Dorsolateral prefrontal cortex (tissue), 120 donors: ENCODE measurements at regions of chr7 and their contacts with region 1.

Region 1: DNA sequence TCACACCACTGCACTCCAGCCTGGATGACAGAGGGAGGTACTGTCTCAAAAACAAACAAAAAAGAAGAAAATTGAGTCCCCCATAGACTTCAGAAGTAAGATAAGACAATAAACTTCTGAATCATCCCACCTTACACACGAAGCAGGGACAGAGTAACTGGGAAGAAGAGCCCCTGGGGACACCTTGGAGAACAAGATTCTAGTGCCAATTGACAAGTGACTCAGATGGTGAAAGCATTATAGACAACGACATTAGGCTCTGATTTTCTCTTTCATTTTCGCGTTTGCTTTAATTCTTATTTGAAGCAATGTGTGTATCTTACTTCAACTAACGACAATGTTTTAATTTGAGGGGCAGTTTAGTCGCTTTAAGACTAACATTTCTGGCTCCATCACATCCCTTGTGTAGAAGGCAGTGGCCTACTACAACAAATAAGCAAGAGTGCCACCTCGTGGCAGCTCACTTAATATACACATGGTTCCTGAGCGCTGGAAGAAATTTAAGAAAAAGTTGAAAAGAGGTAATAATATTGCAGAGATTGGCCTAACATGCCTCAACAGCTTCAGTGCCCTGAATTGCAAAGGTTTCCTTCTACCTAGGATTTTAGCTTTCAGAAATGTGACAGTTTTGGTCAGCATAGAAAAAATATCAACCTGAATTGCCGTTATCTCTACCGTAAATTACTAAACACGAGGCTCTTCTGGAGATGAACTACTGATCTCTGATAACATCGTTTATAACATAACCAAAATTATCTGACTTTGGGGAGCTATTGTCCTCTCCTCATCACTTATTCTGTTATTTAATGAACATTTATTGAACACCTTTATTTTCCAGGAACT is 36.7 kb downstream of the ASNS start:
- DNase-seq: peak; percentile 32 to 89 (median 58)
- H3K4me3 ChIP-seq: no peak overlapping the region
- H3K27ac ChIP-seq: no peak overlapping the region
- H3K27me3 ChIP-seq: peaks cover 0 to 11% (median 0%) of the 10 kb centered on the region in 45 donors
- CTCF ChIP-seq: peak; percentile 47 to 90 (median 79)

Region 2: DNA sequence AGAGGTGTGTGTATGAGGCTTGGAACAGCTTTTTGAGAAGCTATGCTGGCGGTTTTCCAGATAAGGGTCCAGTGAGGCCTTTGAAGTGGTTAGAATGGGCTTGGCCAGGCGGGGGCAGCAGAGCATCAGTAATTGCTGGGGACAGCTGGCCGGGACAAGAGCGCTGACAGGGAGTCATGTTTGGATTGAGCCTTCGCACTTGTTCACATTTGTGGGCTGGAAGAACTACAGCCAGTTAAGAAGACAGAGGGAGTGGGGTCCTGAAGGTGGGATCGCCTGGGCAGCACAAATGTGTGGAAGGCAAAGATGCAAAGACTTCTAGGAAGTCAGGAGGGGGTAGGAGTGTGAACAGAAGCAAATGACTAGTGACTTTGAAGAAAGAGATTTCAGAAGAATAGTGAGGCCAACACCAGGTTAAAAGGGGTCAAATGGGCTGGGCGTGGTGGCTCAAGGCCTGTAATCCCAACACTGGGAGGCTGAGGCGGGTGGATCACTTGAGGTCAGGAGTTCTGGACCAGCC is 730.7 kb before region 1 on chr7:
- intact Hi-C with region 1: loop called in 1 of 2 experiments (anchors 2 kb)
- DNase-seq: peak; percentile 61 to 83 (median 74)
- H3K4me3 ChIP-seq: no peak overlapping the region
- H3K27ac ChIP-seq: no peak overlapping the region
- H3K27me3 ChIP-seq: no peaks in the 10 kb centered on the region
- CTCF ChIP-seq: peak; percentile 21 to 93 (median 76)

Region 3: GRCh38 chr7:97145068-97145467 is 690.4 kb before region 1 on chr7:
- intact Hi-C with region 1: loop called (anchors 10 kb)
- DNase-seq: no peak
- H3K4me3 ChIP-seq: no peak overlapping the region
- H3K27ac ChIP-seq: no peak overlapping the region
- H3K27me3 ChIP-seq: no peaks in the 10 kb centered on the region
- CTCF ChIP-seq: peak; percentile 37 to 82 (median 66)

Region 4: DNA sequence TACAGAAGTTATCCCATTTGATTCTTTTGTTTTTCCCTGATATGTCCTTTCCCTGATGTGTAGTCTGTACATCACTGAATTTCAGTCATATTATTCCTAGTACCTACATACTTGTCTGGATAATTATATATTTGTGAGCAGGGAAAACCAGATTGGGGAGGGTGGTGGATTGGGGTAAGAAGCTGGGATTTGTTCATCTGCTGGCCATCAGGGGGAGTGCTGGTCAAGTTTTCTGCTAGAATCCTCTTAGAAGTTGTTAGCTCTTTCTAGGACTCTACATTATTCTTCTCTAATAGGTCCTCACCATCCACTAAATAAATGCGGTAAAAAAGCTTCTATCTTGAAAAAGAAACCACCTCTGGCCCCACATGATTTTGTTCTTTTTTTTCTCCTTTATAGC is 336.3 kb before region 1 on chr7:
- intact Hi-C with region 1: loop called in 1 of 2 experiments (anchors 5 kb)
- DNase-seq: no peak
- H3K4me3 ChIP-seq: no peak overlapping the region
- H3K27ac ChIP-seq: no peak overlapping the region
- H3K27me3 ChIP-seq: peaks cover 0 to 6% (median 0%) of the 10 kb centered on the region in 45 donors
- CTCF ChIP-seq: peak in 52 of 56 donors; percentile 24 to 68 (median 52)

Region 5: GRCh38 chr7:97801108-97801507 is 34.4 kb before region 1 on chr7:
- intact Hi-C with region 1: no loop called
- DNase-seq: no peak
- H3K4me3 ChIP-seq: no peak overlapping the region
- H3K27ac ChIP-seq: no peak overlapping the region
- H3K27me3 ChIP-seq: peaks cover 0 to 24% (median 0%) of the 10 kb centered on the region in 45 donors
- CTCF ChIP-seq: no peak